ENCODE measurements at regions of chr22 and their contacts with region 1.

Region 1: DNA sequence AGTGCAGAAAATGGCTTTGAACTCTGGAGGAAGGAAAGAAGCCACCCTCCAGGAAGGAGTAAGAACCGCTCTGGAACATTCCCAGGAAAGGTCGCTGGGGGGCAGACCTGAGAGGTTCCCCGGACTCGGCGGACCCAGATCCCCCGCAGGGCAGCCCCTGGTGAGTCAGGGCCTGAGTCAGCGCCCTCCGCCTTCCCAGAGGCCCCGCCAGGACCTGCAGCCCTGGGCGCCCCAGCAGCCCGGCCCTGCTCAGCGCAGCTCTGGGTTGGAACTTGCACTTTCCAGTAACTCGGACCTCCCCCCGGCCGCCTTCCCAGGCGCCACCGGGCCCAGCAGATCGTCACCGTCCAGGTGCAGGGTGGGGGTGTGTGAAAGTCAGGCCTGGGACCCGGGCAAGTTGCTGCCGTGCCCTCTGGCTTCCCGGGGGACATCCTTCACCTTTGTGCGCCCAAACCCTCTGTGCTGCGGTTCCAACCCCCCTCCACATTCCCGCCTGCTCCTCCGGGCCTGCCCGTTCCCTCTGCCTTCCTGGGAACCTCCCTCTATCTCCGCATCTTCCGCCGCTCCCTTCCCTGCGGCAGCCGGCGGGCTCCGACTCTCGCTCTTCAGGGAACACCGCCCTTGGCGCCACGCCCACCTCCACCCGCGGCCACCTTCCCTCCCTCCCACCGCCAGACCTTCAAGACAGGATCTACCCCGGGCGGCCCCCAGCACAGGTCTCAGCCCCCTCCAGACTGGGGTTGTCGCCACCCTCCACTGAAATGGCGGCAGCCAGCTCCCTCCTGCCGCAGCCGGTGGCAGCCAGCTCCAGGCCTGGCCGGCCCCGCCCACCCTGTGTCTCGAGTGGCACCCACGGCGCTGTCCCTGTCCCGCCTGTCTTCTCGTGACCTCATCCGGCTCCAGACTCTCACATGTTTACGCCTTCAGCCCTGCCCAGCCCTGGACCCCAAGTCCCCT is 36.8 kb upstream of the WNT7B start:
- DNase-seq: peak; percentile 98
- H3K4me3 ChIP-seq: peak overlapping the region; percentile 48 to 66 (median 54)
- H3K27ac ChIP-seq: peak overlapping the region; percentile 91
- H3K4me1 ChIP-seq: peaks cover 41% of the 10 kb centered on the region
- H3K27me3 ChIP-seq: no peaks in the 10 kb centered on the region
- CTCF ChIP-seq: peak; percentile 69 to 85

Region 2: GRCh38 chr22:45934659-45935341 is 78.9 kb before region 1 on chr22:
- CTCF ChIA-PET with region 1: no interaction called
- dilution Hi-C with region 1: no loop called
- in situ Hi-C with region 1: no loop called
- intact Hi-C with region 1: no loop called
- DNase-seq: peak; percentile 98
- H3K4me3 ChIP-seq: peak overlapping the region in 2 of 3 experiments; percentile 29 to 42
- H3K27ac ChIP-seq: peak overlapping the region; percentile 75
- H3K4me1 ChIP-seq: peaks cover 20% of the 10 kb centered on the region
- H3K27me3 ChIP-seq: no peaks in the 10 kb centered on the region
- CTCF ChIP-seq: no peak

Region 3: GRCh38 chr22:45984316-45984916 is 29.3 kb before region 1 on chr22:
- CTCF ChIA-PET with region 1: no interaction called
- dilution Hi-C with region 1: no loop called
- in situ Hi-C with region 1: no loop called
- intact Hi-C with region 1: no loop called
- DNase-seq: no peak
- H3K4me3 ChIP-seq: no peak overlapping the region
- H3K27ac ChIP-seq: no peak overlapping the region
- H3K4me1 ChIP-seq: no peaks in the 10 kb centered on the region
- H3K27me3 ChIP-seq: no peaks in the 10 kb centered on the region
- CTCF ChIP-seq: no peak

Region 4: GRCh38 chr22:46035742-46036557 is 22.2 kb after region 1 on chr22:
- CTCF ChIA-PET with region 1: interaction called, 9 read pairs
- dilution Hi-C with region 1: no loop called
- in situ Hi-C with region 1: no loop called
- intact Hi-C with region 1: loop called (anchors 1 kb)
- DNase-seq: peak; percentile 97
- H3K4me3 ChIP-seq: peak overlapping the region; percentile 74 to 89 (median 87)
- H3K27ac ChIP-seq: peak overlapping the region; percentile 80
- H3K4me1 ChIP-seq: peaks cover 19% of the 10 kb centered on the region
- H3K27me3 ChIP-seq: no peaks in the 10 kb centered on the region
- CTCF ChIP-seq: no peak

Region 5: DNA sequence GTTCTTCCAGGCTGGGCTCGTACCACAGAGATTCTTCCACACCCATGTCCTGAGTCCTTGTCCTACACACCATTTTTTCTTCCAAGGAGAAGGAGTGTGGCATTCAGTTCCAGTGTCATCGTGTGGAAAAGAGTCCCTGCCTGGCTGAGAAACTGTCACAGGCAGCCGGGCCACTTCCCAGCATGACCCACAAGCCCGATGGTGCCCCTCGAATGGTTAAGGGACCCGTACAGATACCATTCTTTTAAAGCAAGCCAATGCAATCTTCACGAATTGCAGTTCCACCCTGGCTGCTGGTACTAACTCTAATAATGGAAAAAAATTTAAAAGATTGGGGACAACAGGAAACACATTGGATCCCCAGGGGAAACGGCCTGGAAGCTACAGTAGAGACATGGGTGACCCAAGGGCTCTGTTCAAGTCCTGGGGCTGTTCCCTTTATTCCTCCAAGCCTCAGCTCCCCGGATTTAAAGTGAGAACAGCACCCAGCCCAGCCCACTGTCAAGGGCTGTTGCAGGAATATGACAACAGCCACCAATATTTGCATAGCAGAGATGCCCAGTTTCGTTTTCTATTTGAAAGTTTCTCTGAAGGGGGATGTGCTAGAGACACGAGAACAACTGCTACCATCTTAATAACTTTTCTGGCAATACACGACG is 44.2 kb after region 1 on chr22:
- CTCF ChIA-PET with region 1: no interaction called
- dilution Hi-C with region 1: no loop called
- in situ Hi-C with region 1: no loop called
- intact Hi-C with region 1: loop called (anchors 2 kb)
- DNase-seq: peak; percentile 86
- H3K4me3 ChIP-seq: peak overlapping the region; percentile 4 to 72 (median 59)
- H3K27ac ChIP-seq: peak overlapping the region; percentile 87
- H3K4me1 ChIP-seq: peaks cover 66% of the 10 kb centered on the region
- H3K27me3 ChIP-seq: no peaks in the 10 kb centered on the region
- CTCF ChIP-seq: no peak

Region 6: GRCh38 chr22:46071451-46072109 is 57.8 kb after region 1 on chr22:
- CTCF ChIA-PET with region 1: no interaction called
- dilution Hi-C with region 1: no loop called
- in situ Hi-C with region 1: no loop called
- intact Hi-C with region 1: loop called (anchors 1 kb)
- DNase-seq: peak; percentile 94
- H3K4me3 ChIP-seq: peak overlapping the region; percentile 80 to 99 (median 93)
- H3K27ac ChIP-seq: peak overlapping the region; percentile 94
- H3K4me1 ChIP-seq: peaks cover 30% of the 10 kb centered on the region
- H3K27me3 ChIP-seq: no peaks in the 10 kb centered on the region
- CTCF ChIP-seq: no peak

Region 7: GRCh38 chr22:46079861-46080821 is 66.4 kb after region 1 on chr22:
- CTCF ChIA-PET with region 1: no interaction called
- dilution Hi-C with region 1: no loop called
- in situ Hi-C with region 1: no loop called
- intact Hi-C with region 1: loop called (anchors 2 kb)
- DNase-seq: peak; percentile 95
- H3K4me3 ChIP-seq: peak overlapping the region; percentile 89 to 95 (median 93)
- H3K27ac ChIP-seq: peak overlapping the region; percentile 94
- H3K4me1 ChIP-seq: peaks cover 61% of the 10 kb centered on the region
- H3K27me3 ChIP-seq: no peaks in the 10 kb centered on the region
- CTCF ChIP-seq: no peak

Region 8: GRCh38 chr22:46116491-46116958 is 102.8 kb after region 1 on chr22:
- CTCF ChIA-PET with region 1: no interaction called
- dilution Hi-C with region 1: no loop called
- in situ Hi-C with region 1: loop called in 1 of 2 experiments (anchors 5 kb)
- intact Hi-C with region 1: loop called (anchors 1 kb)
- DNase-seq: peak; percentile 63
- H3K4me3 ChIP-seq: no peak overlapping the region
- H3K27ac ChIP-seq: no peak overlapping the region
- H3K4me1 ChIP-seq: peaks cover 30% of the 10 kb centered on the region
- H3K27me3 ChIP-seq: no peaks in the 10 kb centered on the region
- CTCF ChIP-seq: peak; percentile 29 to 83

Region 9: DNA sequence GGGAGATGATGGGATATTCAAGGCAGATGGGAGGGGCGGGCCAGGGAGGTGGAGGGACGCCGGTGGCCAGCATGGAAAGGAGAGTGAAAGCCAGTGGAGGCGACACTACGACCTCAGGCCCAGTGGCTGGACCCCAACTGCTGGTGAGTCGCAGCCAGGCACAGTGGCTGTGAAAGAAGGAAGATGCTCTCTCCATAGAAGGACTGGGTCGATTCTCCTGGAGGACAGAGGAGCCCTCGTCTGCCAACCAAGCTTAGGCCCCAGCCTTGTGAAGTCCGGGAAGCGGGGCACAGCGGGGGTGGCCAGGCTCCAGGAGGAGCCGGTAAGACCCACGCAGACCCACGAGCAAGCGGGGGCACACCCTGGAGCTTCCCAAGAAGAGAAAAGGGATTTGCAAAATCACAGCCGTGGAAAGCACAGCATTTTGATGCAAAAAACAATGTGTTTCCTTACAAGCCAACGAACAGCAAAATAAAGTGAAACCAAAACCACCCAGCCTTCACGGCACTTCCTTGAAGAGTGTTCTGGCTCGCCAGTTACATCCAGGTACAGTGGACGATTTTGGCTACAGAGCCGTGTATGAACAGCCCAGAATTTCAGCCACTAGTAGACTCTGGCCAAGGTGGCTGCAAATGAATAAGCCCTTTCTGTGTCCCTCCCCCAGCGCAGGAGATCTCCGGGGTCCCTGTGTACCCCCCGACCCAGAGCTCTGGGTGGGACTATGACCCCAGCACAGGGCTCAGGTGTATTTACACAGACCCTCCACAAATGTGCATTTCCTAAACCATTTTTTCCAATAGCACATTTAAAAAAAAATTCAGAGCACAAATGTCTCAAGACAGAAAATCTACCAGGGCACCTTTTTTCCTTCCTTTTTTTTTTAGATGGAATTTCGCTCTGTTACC is 418.7 kb after region 1 on chr22:
- CTCF ChIA-PET with region 1: no interaction called
- dilution Hi-C with region 1: loop called (anchors 25 kb)
- in situ Hi-C with region 1: no loop called
- intact Hi-C with region 1: no loop called
- DNase-seq: no peak
- H3K4me3 ChIP-seq: no peak overlapping the region
- H3K27ac ChIP-seq: no peak overlapping the region
- H3K4me1 ChIP-seq: peaks cover 4% of the 10 kb centered on the region
- H3K27me3 ChIP-seq: no peaks in the 10 kb centered on the region
- CTCF ChIP-seq: no peak